IMR-90 (cell line): ENCODE measurements at regions of chr17 and their contacts with region 1.

Region 1: GRCh38 chr17:74748529-74749365 is at the start of gene NHERF1:
- DNase-seq: peak; percentile 82
- ATAC-seq: peak; percentile 99
- H3K4me3 ChIP-seq: peak within 1 kb of the TSS; percentile 87
- H3K27ac ChIP-seq: no peak within 1 kb of the TSS; the same call in 1 of the 2 replicates
- H3K4me1 ChIP-seq: peaks cover 8% of the 10 kb centered on the region; the same call in 1 of the 2 replicates
- H3K27me3 ChIP-seq: no peaks in the 10 kb centered on the region
- CTCF ChIP-seq: 0 out of 2 replicates have a peak, but pooled peaks have one; percentile 8
- POLR2A ChIP-seq: peak; percentile 91
- RAD21 ChIP-seq: no peak
- total RNA-seq, gene NHERF1: 3.3 and 3.8 TPM in 2 replicates

Region 2: GRCh38 chr17:74584292-74585060 is 164.3 kb before region 1 on chr17:
- CTCF ChIA-PET with region 1: no interaction called
- POLR2A ChIA-PET with region 1: no interaction called
- dilution Hi-C with region 1: no loop called
- in situ Hi-C with region 1: no loop called
- intact Hi-C with region 1: no loop called
- DNase-seq: no peak
- ATAC-seq: no peak
- H3K4me3 ChIP-seq: no peak overlapping the region
- H3K27ac ChIP-seq: no peak overlapping the region
- H3K4me1 ChIP-seq: no peaks in the 10 kb centered on the region
- H3K27me3 ChIP-seq: no peaks in the 10 kb centered on the region
- CTCF ChIP-seq: no peak
- POLR2A ChIP-seq: no peak
- RAD21 ChIP-seq: no peak

Region 3: GRCh38 chr17:74770498-74771318 is 22.0 kb after region 1 on chr17:
- CTCF ChIA-PET with region 1: interaction called, 5 read pairs
- POLR2A ChIA-PET with region 1: no interaction called
- dilution Hi-C with region 1: no loop called
- in situ Hi-C with region 1: no loop called
- intact Hi-C with region 1: loop called (anchors 2 kb)
- DNase-seq: peak; percentile 24
- ATAC-seq: peak; percentile 53
- H3K4me3 ChIP-seq: no peak overlapping the region
- H3K27ac ChIP-seq: no peak overlapping the region
- H3K4me1 ChIP-seq: peaks cover 15% of the 10 kb centered on the region
- H3K27me3 ChIP-seq: no peaks in the 10 kb centered on the region
- CTCF ChIP-seq: peak; percentile 70
- POLR2A ChIP-seq: no peak
- RAD21 ChIP-seq: peak; percentile 78

Region 4: DNA sequence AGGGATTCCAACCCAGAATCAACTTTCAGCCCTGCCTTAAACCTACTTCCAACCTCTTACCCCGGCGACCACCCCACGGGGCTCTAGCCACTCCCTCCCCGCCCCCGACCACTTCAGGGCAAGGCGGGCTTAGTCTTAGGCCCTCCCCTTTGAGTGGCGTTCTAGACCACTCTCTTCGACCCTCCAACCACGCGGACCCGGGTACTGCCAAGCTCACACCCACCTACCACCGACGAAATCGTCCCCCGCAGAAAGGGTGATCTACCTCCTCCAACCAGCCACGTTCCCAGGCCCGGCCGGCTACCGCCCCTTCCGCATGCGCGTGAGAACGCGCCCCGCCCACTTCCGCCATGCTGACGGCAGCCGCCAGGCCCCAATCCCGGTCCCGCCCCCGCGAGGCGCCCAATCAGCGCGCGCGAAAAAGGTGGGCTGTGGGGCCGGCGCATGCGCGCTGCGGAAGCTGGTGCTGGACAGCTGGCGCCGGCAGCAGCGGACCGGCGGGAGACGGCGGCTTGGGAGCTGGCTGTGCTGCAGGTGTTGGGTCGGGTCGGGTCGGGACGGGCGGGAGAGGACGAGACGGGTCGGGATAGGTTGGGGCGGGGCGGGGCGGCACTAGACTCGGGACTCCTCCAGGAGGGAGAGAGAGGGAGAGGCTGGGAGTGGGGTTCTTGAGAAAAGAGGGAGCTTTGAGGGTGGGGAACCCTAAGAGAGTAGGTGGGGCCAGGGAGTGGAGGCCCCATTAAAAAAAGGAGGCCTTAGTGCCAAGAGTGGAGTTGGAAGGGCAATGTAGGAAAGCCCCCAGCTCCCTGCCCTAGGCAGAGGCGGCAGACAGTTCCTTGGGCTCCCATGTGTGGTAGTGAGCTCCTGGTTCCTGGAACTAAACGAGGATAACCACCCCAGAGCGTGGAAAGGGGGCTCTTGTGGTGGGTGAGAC is 27.6 kb after region 1 on chr17 and contains the start of gene NAT9:
- CTCF ChIA-PET with region 1: interaction called, 5 read pairs
- POLR2A ChIA-PET with region 1: no interaction called
- dilution Hi-C with region 1: no loop called
- in situ Hi-C with region 1: no loop called
- intact Hi-C with region 1: loop called (anchors 1 kb)
- DNase-seq: peak; percentile 92
- ATAC-seq: peak; percentile 95
- H3K4me3 ChIP-seq: peak within 1 kb of the TSS; percentile 73
- H3K27ac ChIP-seq: peak within 1 kb of the TSS; percentile 85
- H3K4me1 ChIP-seq: peaks cover 10% of the 10 kb centered on the region
- H3K27me3 ChIP-seq: no peaks in the 10 kb centered on the region
- CTCF ChIP-seq: no peak
- POLR2A ChIP-seq: peak; percentile 65; the same call in 1 of the 2 replicates
- RAD21 ChIP-seq: no peak
- total RNA-seq, gene NAT9: 25.8 and 48.9 TPM in 2 replicates

Region 5: GRCh38 chr17:74842599-74843351 is 94.0 kb after region 1 on chr17:
- CTCF ChIA-PET with region 1: no interaction called
- POLR2A ChIA-PET with region 1: no interaction called
- dilution Hi-C with region 1: no loop called
- in situ Hi-C with region 1: no loop called
- intact Hi-C with region 1: loop called (anchors 5 kb)
- DNase-seq: peak; percentile 46
- ATAC-seq: peak; percentile 91
- H3K4me3 ChIP-seq: peak overlapping the region; percentile 50
- H3K27ac ChIP-seq: no peak overlapping the region
- H3K4me1 ChIP-seq: peaks cover 7% of the 10 kb centered on the region
- H3K27me3 ChIP-seq: peaks cover 6% of the 10 kb centered on the region; the same call in 1 of the 2 replicates
- CTCF ChIP-seq: peak; percentile 58
- POLR2A ChIP-seq: no peak
- RAD21 ChIP-seq: peak; percentile 58

Region 6: GRCh38 chr17:74864866-74865395 is 116.2 kb after region 1 on chr17:
- CTCF ChIA-PET with region 1: interaction called, 5 read pairs
- POLR2A ChIA-PET with region 1: no interaction called
- dilution Hi-C with region 1: no loop called
- in situ Hi-C with region 1: loop called (anchors 5 kb)
- intact Hi-C with region 1: loop called (anchors 1 kb)
- DNase-seq: peak; percentile 57
- ATAC-seq: peak; percentile 89
- H3K4me3 ChIP-seq: no peak overlapping the region
- H3K27ac ChIP-seq: no peak overlapping the region
- H3K4me1 ChIP-seq: no peaks in the 10 kb centered on the region; the same call in 1 of the 2 replicates
- H3K27me3 ChIP-seq: peaks cover 24% of the 10 kb centered on the region
- CTCF ChIP-seq: peak; percentile 90
- POLR2A ChIP-seq: no peak
- RAD21 ChIP-seq: peak; percentile 80